Heart left ventricle (tissue), 16 donors: ENCODE measurements at regions of chr4 and their contacts with region 1.

Region 1: GRCh38 chr4:113761620-113762185 is at the start of gene CAMK2D:
- DNase-seq: peak; percentile 90 to 92 (median 92)
- ATAC-seq: peak; percentile 74 to 84 (median 80)
- H3K4me3 ChIP-seq: peak within 1 kb of the TSS; percentile 70 to 91 (median 88)
- H3K27ac ChIP-seq: peak within 1 kb of the TSS; percentile 97 to 100 (median 99)
- H3K4me1 ChIP-seq: peaks cover 0 to 42% (median 12%) of the 10 kb centered on the region in 12 donors
- H3K27me3 ChIP-seq: no peaks in the 10 kb centered on the region
- CTCF ChIP-seq: peak in 11 of 12 donors; percentile 40 to 76 (median 67)
- POLR2A ChIP-seq: peak in 1 of 2 donors; percentile 57
- total RNA-seq, gene CAMK2D: 167 to 294 (median 224) TPM

Region 2: GRCh38 chr4:113383111-113383785 is 378.5 kb before region 1 on chr4:
- intact Hi-C with region 1: loop called in 1 of 10 experiments (anchors 5 kb)
- DNase-seq: peak in 1 of 5 donors; percentile 30
- ATAC-seq: peak; percentile 41 to 87 (median 78)
- H3K4me3 ChIP-seq: no peak overlapping the region
- H3K27ac ChIP-seq: peak overlapping the region in 11 of 12 donors; percentile 35 to 76 (median 59)
- H3K4me1 ChIP-seq: peaks cover 2 to 39% (median 27%) of the 10 kb centered on the region in 12 donors
- H3K27me3 ChIP-seq: no peaks in the 10 kb centered on the region
- CTCF ChIP-seq: no peak
- POLR2A ChIP-seq: no peak

Region 3: DNA sequence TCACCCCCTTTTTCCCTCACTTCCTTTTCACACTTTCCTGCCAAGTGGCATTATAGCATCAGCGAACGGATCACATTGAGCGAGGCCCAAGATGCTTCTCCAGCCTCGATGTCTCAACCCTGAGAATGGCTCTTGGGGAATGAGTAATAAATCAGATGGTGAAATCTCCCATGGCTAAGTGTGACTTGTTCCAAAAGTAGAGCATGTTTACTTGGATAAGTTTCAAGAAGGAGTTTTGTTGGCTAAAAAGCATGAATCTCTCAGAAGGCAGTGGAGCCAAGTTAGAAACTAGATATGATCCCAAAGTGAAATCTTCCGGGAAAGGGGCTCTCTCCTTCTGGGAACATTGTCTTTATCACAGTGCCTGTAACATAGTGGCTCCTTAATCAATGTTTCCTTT is 316.4 kb before region 1 on chr4:
- intact Hi-C with region 1: loop called in 5 of 10 experiments (anchors 5 to 10 kb)
- DNase-seq: peak in 4 of 5 donors; percentile 35 to 71 (median 50)
- ATAC-seq: peak; percentile 65 to 88 (median 76)
- H3K4me3 ChIP-seq: no peak overlapping the region
- H3K27ac ChIP-seq: peak overlapping the region; percentile 1 to 84 (median 60)
- H3K4me1 ChIP-seq: peaks cover 0 to 50% (median 27%) of the 10 kb centered on the region in 12 donors
- H3K27me3 ChIP-seq: no peaks in the 10 kb centered on the region
- CTCF ChIP-seq: no peak
- POLR2A ChIP-seq: no peak

Region 4: GRCh38 chr4:113468165-113469022 is 293.3 kb before region 1 on chr4:
- intact Hi-C with region 1: loop called in 2 of 10 experiments (anchors 5 kb)
- DNase-seq: peak in 4 of 5 donors; percentile 71 to 89 (median 82)
- ATAC-seq: peak; percentile 92 to 97 (median 96)
- H3K4me3 ChIP-seq: peak overlapping the region in 1 of 12 donors; percentile 1
- H3K27ac ChIP-seq: peak overlapping the region; percentile 75 to 95 (median 86)
- H3K4me1 ChIP-seq: peaks cover 2 to 50% (median 31%) of the 10 kb centered on the region in 12 donors
- H3K27me3 ChIP-seq: no peaks in the 10 kb centered on the region
- CTCF ChIP-seq: no peak
- POLR2A ChIP-seq: peak in 1 of 2 donors; percentile 43

Region 5: DNA sequence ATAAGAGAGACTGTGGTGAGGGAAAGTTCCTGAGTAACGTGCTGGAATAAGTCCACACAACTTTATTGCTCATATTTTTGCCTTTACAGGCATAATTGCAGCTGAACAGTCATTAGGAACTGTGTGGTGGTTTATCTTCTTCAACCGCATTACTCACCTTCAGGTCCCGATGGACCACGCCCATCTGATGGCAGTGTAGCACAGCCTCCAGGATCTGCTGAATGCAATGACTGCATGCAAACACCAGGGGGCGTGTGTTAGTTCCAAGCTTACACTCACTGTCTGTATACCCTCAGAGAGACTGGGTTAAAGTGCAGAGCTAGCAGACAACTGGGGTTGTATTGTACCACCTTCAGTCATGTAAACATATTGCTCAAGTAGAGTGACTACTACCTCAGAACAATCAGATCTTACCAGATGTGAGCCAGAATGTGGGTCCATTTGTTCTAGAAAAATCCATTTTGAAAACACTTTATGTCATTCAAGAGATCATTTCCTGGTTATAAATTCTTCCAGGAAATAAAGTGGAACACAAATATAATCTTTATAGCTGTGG is 214.1 kb before region 1 on chr4:
- intact Hi-C with region 1: loop called (anchors 1 to 5 kb)
- DNase-seq: peak; percentile 83 to 90 (median 86)
- ATAC-seq: peak; percentile 94 to 99 (median 98)
- H3K4me3 ChIP-seq: no peak overlapping the region
- H3K27ac ChIP-seq: peak overlapping the region in 11 of 12 donors; percentile 23 to 75 (median 56)
- H3K4me1 ChIP-seq: peaks cover 0 to 19% (median 12%) of the 10 kb centered on the region in 12 donors
- H3K27me3 ChIP-seq: no peaks in the 10 kb centered on the region
- CTCF ChIP-seq: peak; percentile 91 to 99 (median 97)
- POLR2A ChIP-seq: no peak

Region 6: DNA sequence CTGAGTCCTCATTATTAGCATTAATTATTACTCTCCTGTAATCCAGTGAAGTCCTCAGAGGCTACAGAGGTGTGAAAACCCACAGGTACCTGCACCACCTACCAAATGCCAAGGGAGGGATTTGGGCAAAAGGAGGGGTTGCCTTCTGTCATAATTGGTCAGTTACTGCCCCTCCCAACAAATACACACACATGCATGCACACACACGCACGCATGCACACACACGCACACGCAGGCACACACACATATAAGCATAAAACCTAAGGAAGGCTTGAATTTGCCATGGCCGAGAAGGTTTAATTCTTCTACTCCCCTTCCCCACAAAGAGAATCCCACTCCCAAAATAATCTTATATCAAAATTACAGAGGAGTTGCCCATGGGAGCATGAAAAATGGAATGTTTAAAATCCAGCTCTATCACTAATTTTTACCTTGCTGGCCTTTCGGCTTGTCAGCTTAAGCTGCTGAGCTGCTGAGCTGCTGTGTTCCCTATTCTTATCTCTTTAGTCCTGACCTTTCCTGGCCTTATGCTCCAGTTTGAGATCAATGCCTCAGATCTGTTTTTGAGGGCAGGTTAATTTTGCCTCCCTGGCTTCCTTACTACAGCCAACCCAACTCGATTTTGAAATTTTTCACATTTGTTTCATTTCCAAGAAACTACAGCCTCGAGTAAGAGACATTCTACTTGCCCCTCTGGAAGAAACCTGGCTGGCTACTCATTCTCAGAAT is 95.2 kb before region 1 on chr4:
- intact Hi-C with region 1: no loop called
- DNase-seq: no peak
- ATAC-seq: peak in 2 of 4 donors; percentile 41 to 64
- H3K4me3 ChIP-seq: no peak overlapping the region
- H3K27ac ChIP-seq: peak overlapping the region in 8 of 12 donors; percentile 8 to 68 (median 38)
- H3K4me1 ChIP-seq: peaks cover 0 to 45% (median 10%) of the 10 kb centered on the region in 12 donors
- H3K27me3 ChIP-seq: no peaks in the 10 kb centered on the region
- CTCF ChIP-seq: no peak
- POLR2A ChIP-seq: no peak

Region 7: GRCh38 chr4:113684534-113685091 is 77.1 kb before region 1 on chr4:
- intact Hi-C with region 1: loop called in 8 of 10 experiments (anchors 2 to 10 kb)
- DNase-seq: peak; percentile 67 to 85 (median 83)
- ATAC-seq: peak; percentile 92 to 97 (median 96)
- H3K4me3 ChIP-seq: no peak overlapping the region
- H3K27ac ChIP-seq: peak overlapping the region; percentile 33 to 90 (median 78)
- H3K4me1 ChIP-seq: peaks cover 7 to 64% (median 45%) of the 10 kb centered on the region in 12 donors
- H3K27me3 ChIP-seq: no peaks in the 10 kb centered on the region
- CTCF ChIP-seq: peak in 11 of 12 donors; percentile 22 to 61 (median 40)
- POLR2A ChIP-seq: no peak

Region 8: GRCh38 chr4:113749178-113749577 is 12.5 kb before region 1 on chr4:
- intact Hi-C with region 1: no loop called
- DNase-seq: no peak
- ATAC-seq: no peak
- H3K4me3 ChIP-seq: no peak overlapping the region
- H3K27ac ChIP-seq: no peak overlapping the region
- H3K4me1 ChIP-seq: peaks cover 0 to 60% (median 33%) of the 10 kb centered on the region in 12 donors
- H3K27me3 ChIP-seq: no peaks in the 10 kb centered on the region
- CTCF ChIP-seq: no peak
- POLR2A ChIP-seq: no peak